Endothelial cell of umbilical vein (primary cell): ENCODE measurements at regions of chr11 and their contacts with region 1.

Region 1: GRCh38 chr11:103601225-103601846 is 435.1 kb upstream of the DDI1 start:
- DNase-seq: peak; percentile 78
- H3K4me3 ChIP-seq: no peak overlapping the region
- H3K27ac ChIP-seq: peak overlapping the region; percentile 58
- H3K4me1 ChIP-seq: peaks cover 12% of the 10 kb centered on the region
- H3K27me3 ChIP-seq: no peaks in the 10 kb centered on the region
- CTCF ChIP-seq: peak; percentile 80 to 89
- POLR2A ChIP-seq: no peak

Region 2: GRCh38 chr11:103108933-103109817 is 492.2 kb before region 1 on chr11 and contains the start of gene DYNC2H1:
- CTCF ChIA-PET with region 1: interaction called, 10 read pairs
- POLR2A ChIA-PET with region 1: no interaction called
- dilution Hi-C with region 1: no loop called
- intact Hi-C with region 1: loop called (anchors 1 kb)
- DNase-seq: peak; percentile 92
- H3K4me3 ChIP-seq: peak within 1 kb of the TSS; percentile 21 to 73 (median 71)
- H3K27ac ChIP-seq: no peak within 1 kb of the TSS
- H3K4me1 ChIP-seq: peaks cover 6% of the 10 kb centered on the region
- H3K27me3 ChIP-seq: peaks cover 7 to 15% of the 10 kb centered on the region in 2 experiments
- CTCF ChIP-seq: peak; percentile 39 to 66
- POLR2A ChIP-seq: peak; percentile 41
- total RNA-seq, gene DYNC2H1: 4.2 and 5.7 TPM in 2 replicates

Region 3: GRCh38 chr11:103257360-103257759 is 344.0 kb before region 1 on chr11:
- CTCF ChIA-PET with region 1: interaction called, 36 read pairs
- POLR2A ChIA-PET with region 1: no interaction called
- dilution Hi-C with region 1: no loop called
- intact Hi-C with region 1: loop called (anchors 1 kb)
- DNase-seq: peak; percentile 60
- H3K4me3 ChIP-seq: no peak overlapping the region
- H3K27ac ChIP-seq: no peak overlapping the region
- H3K4me1 ChIP-seq: no peaks in the 10 kb centered on the region
- H3K27me3 ChIP-seq: no peaks in the 10 kb centered on the region
- CTCF ChIP-seq: peak in 1 of 2 donors; percentile 32
- POLR2A ChIP-seq: no peak

Region 4: GRCh38 chr11:103464420-103464819 is 136.9 kb before region 1 on chr11:
- CTCF ChIA-PET with region 1: interaction called, 9 read pairs
- POLR2A ChIA-PET with region 1: no interaction called
- dilution Hi-C with region 1: no loop called
- intact Hi-C with region 1: loop called (anchors 5 kb)
- DNase-seq: no peak
- H3K4me3 ChIP-seq: no peak overlapping the region
- H3K27ac ChIP-seq: no peak overlapping the region
- H3K4me1 ChIP-seq: no peaks in the 10 kb centered on the region
- H3K27me3 ChIP-seq: no peaks in the 10 kb centered on the region
- CTCF ChIP-seq: no peak
- POLR2A ChIP-seq: no peak

Region 5: GRCh38 chr11:103529181-103529684 is 72.1 kb before region 1 on chr11:
- CTCF ChIA-PET with region 1: interaction called, 4 read pairs
- POLR2A ChIA-PET with region 1: no interaction called
- dilution Hi-C with region 1: no loop called
- intact Hi-C with region 1: loop called (anchors 2 kb)
- DNase-seq: peak; percentile 75
- H3K4me3 ChIP-seq: no peak overlapping the region
- H3K27ac ChIP-seq: peak overlapping the region; percentile 95
- H3K4me1 ChIP-seq: peaks cover 72% of the 10 kb centered on the region
- H3K27me3 ChIP-seq: no peaks in the 10 kb centered on the region
- CTCF ChIP-seq: no peak
- POLR2A ChIP-seq: peak; percentile 42

Region 6: DNA sequence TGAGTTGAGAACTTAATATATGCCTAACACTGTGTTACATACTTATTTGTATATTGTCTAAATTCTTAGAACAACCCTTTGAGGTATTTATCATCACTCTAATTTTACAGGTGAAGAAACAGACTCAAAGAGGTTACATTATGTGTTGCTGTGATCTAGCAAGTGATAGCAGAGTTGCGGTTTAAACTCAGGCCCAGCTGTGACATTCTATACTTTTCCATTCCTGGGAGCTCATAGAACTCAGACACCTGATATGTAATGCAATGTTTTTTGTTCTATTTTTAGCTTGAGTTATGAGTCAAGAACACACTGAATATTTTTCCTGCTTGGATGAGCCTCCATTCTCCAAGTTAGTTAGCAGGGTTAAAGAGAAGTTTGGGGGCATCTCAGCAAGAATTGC is 14.6 kb before region 1 on chr11:
- CTCF ChIA-PET with region 1: interaction called, 13 read pairs
- POLR2A ChIA-PET with region 1: no interaction called
- dilution Hi-C with region 1: no loop called
- intact Hi-C with region 1: no loop called
- DNase-seq: peak; percentile 55
- H3K4me3 ChIP-seq: no peak overlapping the region
- H3K27ac ChIP-seq: peak overlapping the region; percentile 88
- H3K4me1 ChIP-seq: peaks cover 44% of the 10 kb centered on the region
- H3K27me3 ChIP-seq: no peaks in the 10 kb centered on the region
- CTCF ChIP-seq: no peak
- POLR2A ChIP-seq: no peak

Region 7: DNA sequence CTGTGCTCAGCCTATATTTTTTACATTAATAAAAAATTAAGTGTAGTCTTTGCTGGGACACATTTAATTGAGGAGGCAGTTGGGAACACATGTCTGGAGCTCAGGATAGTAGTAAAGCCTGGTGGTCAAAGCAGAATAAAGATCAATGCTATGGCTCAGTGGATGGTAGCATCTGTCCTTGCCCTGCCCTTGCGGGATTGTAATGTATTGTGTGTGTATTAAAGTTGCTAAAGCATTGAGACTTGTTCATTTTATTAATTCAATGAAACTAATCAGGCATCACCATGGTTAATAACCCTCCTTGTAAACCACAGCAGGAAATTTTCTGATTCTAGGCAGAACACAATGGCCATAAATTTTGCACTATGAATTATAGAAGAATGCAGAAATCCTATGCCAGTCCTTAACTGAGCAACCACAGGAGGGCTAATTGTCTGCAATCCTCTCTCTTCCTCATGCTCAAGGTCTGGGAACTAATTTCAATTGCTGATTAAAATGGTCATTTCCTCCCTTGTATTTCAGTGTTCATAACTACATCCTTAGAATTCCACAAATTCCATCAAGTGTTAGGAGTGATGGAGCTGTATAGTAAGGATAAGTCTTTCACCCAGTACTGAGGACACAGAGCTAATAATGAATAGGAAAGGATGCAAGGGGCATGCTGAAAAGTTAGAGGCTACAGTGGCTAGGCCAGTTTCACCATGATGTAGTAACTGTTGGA is 31.9 kb after region 1 on chr11:
- CTCF ChIA-PET with region 1: no interaction called
- POLR2A ChIA-PET with region 1: no interaction called
- dilution Hi-C with region 1: no loop called
- intact Hi-C with region 1: no loop called
- DNase-seq: peak; percentile 81
- H3K4me3 ChIP-seq: no peak overlapping the region
- H3K27ac ChIP-seq: peak overlapping the region; percentile 97
- H3K4me1 ChIP-seq: peaks cover 42% of the 10 kb centered on the region
- H3K27me3 ChIP-seq: no peaks in the 10 kb centered on the region
- CTCF ChIP-seq: peak in 1 of 2 donors; percentile 27
- POLR2A ChIP-seq: no peak

Region 8: GRCh38 chr11:104151404-104152204 is 550.3 kb after region 1 on chr11:
- CTCF ChIA-PET with region 1: no interaction called
- POLR2A ChIA-PET with region 1: no interaction called
- dilution Hi-C with region 1: no loop called
- intact Hi-C with region 1: loop called (anchors 5 kb)
- DNase-seq: peak; percentile 41
- H3K4me3 ChIP-seq: no peak overlapping the region
- H3K27ac ChIP-seq: no peak overlapping the region
- H3K4me1 ChIP-seq: peaks cover 6% of the 10 kb centered on the region
- H3K27me3 ChIP-seq: no peaks in the 10 kb centered on the region
- CTCF ChIP-seq: peak in 1 of 2 donors; percentile 19
- POLR2A ChIP-seq: no peak